B cell (primary cell): ENCODE measurements at regions of chr18 and their contacts with region 1.

Region 1: DNA sequence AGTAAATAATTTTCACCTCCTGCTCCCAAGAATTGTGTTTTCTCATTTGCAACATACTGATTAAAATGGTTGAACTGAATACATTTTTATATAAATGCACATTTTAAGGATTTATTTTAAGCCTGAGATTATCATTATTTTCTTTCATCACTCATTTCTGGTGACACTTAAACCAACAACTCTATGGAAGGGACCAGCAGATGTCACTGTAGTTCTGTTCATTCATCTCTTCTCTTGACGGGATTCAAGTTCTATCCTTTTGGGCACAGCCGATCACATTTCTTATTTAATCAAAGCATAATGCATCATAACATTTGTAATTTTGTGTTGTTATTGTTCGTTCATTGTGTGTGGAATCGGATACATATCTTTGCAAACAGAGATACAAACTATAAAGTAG is 417.9 kb downstream of the HRH4 start:
- DNase-seq: peak; percentile 39
- ATAC-seq: no peak
- H3K4me3 ChIP-seq: no peak overlapping the region
- H3K4me3 Mint-ChIP-seq: no peak overlapping the region
- H3K27ac ChIP-seq: no peak overlapping the region
- H3K27ac Mint-ChIP-seq: no peak overlapping the region
- H3K4me1 ChIP-seq: no peaks in the 10 kb centered on the region
- H3K4me1 Mint-ChIP-seq: peaks cover 5% of the 10 kb centered on the region
- H3K27me3 ChIP-seq: peaks cover 0 to 6% (median 0%) of the 10 kb centered on the region in 4 experiments
- H3K27me3 Mint-ChIP-seq: peaks cover 15% of the 10 kb centered on the region
- CTCF ChIP-seq: peak; percentile 72

Region 2: GRCh38 chr18:24964216-24964615 is 85.9 kb after region 1 on chr18:
- CTCF ChIA-PET with region 1: no interaction called
- POLR2A ChIA-PET with region 1: no interaction called
- intact Hi-C with region 1: loop called (anchors 10 kb)
- DNase-seq: peak; percentile 76
- ATAC-seq: peak; percentile 100
- H3K4me3 ChIP-seq: no peak overlapping the region
- H3K4me3 Mint-ChIP-seq: no peak overlapping the region
- H3K27ac ChIP-seq: peak overlapping the region; percentile 52 to 85
- H3K27ac Mint-ChIP-seq: peak overlapping the region; percentile 87
- H3K4me1 ChIP-seq: peaks cover 14 to 15% of the 10 kb centered on the region in 2 donors
- H3K4me1 Mint-ChIP-seq: peaks cover 14% of the 10 kb centered on the region
- H3K27me3 ChIP-seq: no peaks in the 10 kb centered on the region
- H3K27me3 Mint-ChIP-seq: no peaks in the 10 kb centered on the region
- CTCF ChIP-seq: no peak

Region 3: GRCh38 chr18:25062720-25063119 is 184.4 kb after region 1 on chr18:
- CTCF ChIA-PET with region 1: no interaction called
- POLR2A ChIA-PET with region 1: no interaction called
- intact Hi-C with region 1: loop called (anchors 1 kb)
- DNase-seq: no peak
- ATAC-seq: no peak
- H3K4me3 ChIP-seq: no peak overlapping the region
- H3K4me3 Mint-ChIP-seq: no peak overlapping the region
- H3K27ac ChIP-seq: no peak overlapping the region
- H3K27ac Mint-ChIP-seq: no peak overlapping the region
- H3K4me1 ChIP-seq: no peaks in the 10 kb centered on the region
- H3K4me1 Mint-ChIP-seq: no peaks in the 10 kb centered on the region
- H3K27me3 ChIP-seq: no peaks in the 10 kb centered on the region
- H3K27me3 Mint-ChIP-seq: no peaks in the 10 kb centered on the region
- CTCF ChIP-seq: no peak

Region 4: GRCh38 chr18:25247725-25248124 is 369.4 kb after region 1 on chr18:
- CTCF ChIA-PET with region 1: no interaction called
- POLR2A ChIA-PET with region 1: no interaction called
- intact Hi-C with region 1: no loop called
- DNase-seq: no peak
- ATAC-seq: no peak
- H3K4me3 ChIP-seq: no peak overlapping the region
- H3K4me3 Mint-ChIP-seq: no peak overlapping the region
- H3K27ac ChIP-seq: no peak overlapping the region
- H3K27ac Mint-ChIP-seq: no peak overlapping the region
- H3K4me1 ChIP-seq: no peaks in the 10 kb centered on the region
- H3K4me1 Mint-ChIP-seq: no peaks in the 10 kb centered on the region
- H3K27me3 ChIP-seq: no peaks in the 10 kb centered on the region
- H3K27me3 Mint-ChIP-seq: peaks cover 3% of the 10 kb centered on the region
- CTCF ChIP-seq: no peak

Region 5: DNA sequence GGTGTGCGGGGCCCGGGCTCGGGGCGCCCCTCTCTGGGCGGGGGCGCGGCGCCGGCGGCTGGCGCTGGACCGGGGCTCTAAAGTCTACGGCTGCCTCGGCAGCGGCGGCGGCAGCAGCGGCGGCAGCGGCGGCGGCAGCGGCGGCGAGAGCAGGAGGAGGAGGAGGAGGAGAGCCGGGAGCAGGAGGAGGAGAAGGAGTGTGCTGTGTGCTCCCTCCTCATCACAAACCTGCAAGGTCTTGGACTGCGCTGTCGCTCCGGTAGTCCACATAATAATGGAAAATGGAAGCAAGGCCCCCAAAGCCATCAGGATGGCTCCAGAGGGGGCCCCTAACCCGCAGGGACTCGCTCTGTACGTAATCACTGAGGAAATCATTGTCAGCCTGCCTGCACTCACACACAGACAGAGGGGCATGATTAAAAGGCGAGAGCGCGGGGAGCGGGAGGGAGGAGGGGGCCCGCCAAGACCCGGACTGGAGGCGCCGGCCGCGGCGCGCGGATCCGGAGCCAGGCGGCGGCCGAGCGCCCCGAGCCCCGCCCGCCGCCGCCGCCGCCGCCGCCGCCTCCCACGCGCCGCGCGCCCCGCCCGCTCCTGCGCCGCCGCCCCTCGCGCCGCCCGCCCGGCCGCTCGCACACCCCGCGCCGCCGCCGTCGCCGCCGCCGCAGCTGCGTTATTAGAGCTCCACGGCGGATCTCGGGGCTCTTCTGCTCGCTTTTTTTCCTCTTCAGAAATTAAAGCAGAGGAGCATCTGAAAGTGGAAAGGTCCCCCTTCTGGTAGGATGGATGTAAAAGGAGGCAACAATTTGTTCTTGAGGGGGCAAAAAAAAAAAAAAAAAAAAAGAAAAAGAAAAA is 473.7 kb after region 1 on chr18 and contains the start of gene ZNF521:
- CTCF ChIA-PET with region 1: interaction called, 3 read pairs
- POLR2A ChIA-PET with region 1: no interaction called
- intact Hi-C with region 1: loop called (anchors 5 kb)
- DNase-seq: peak; percentile 77
- ATAC-seq: peak; percentile 85
- H3K4me3 ChIP-seq: peak within 1 kb of the TSS; percentile 53 to 73 (median 70)
- H3K4me3 Mint-ChIP-seq: peak within 1 kb of the TSS; percentile 85
- H3K27ac ChIP-seq: no peak within 1 kb of the TSS
- H3K27ac Mint-ChIP-seq: peak within 1 kb of the TSS; percentile 46
- H3K4me1 ChIP-seq: peaks cover 24 to 28% of the 10 kb centered on the region in 2 donors
- H3K4me1 Mint-ChIP-seq: peaks cover 16% of the 10 kb centered on the region
- H3K27me3 ChIP-seq: peaks cover 0 to 53% (median 41%) of the 10 kb centered on the region in 4 experiments
- H3K27me3 Mint-ChIP-seq: peaks cover 43% of the 10 kb centered on the region
- CTCF ChIP-seq: no peak
- total RNA-seq, gene ZNF521: 9.0 and 12.3 TPM in 2 replicates

Region 6: DNA sequence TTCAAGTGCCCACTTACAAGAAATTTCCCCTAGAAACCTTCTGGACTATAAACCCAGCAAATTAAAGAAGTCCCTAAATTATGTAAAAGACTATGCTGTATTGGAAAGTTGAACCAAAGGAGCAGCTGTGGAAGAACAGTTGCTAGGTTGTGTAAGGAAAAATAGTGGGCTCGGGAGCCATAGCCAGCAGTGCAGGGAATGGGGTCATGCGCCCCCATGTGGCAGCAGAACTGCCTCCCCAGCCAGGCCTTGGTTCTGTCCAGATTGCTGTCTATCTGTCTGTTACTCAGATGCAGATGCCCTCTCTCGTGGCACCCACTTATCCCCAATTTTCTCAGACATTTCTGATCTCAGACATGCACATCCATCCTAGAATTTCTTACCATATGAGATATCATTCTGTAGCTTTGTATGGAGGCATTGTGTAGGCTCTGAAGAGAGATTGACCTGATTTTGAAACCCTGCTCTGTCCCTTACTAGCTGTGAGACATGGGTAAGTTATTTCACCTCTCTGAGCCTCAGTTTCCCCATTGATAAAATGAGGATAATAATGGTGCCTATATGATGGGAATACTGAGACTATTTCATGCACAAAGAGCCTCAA is 953.8 kb after region 1 on chr18:
- CTCF ChIA-PET with region 1: interaction called, 7 read pairs
- POLR2A ChIA-PET with region 1: no interaction called
- intact Hi-C with region 1: loop called (anchors 2 kb)
- DNase-seq: peak; percentile 12
- ATAC-seq: no peak
- H3K4me3 ChIP-seq: no peak overlapping the region
- H3K4me3 Mint-ChIP-seq: no peak overlapping the region
- H3K27ac ChIP-seq: no peak overlapping the region
- H3K27ac Mint-ChIP-seq: no peak overlapping the region
- H3K4me1 ChIP-seq: no peaks in the 10 kb centered on the region
- H3K4me1 Mint-ChIP-seq: no peaks in the 10 kb centered on the region
- H3K27me3 ChIP-seq: no peaks in the 10 kb centered on the region
- H3K27me3 Mint-ChIP-seq: peaks cover 12% of the 10 kb centered on the region
- CTCF ChIP-seq: peak; percentile 45

Region 7: GRCh38 chr18:25896178-25896780 is 1018.0 kb after region 1 on chr18:
- CTCF ChIA-PET with region 1: interaction called, 10 read pairs
- POLR2A ChIA-PET with region 1: no interaction called
- intact Hi-C with region 1: no loop called
- DNase-seq: peak; percentile 28
- ATAC-seq: peak; percentile 47
- H3K4me3 ChIP-seq: no peak overlapping the region
- H3K4me3 Mint-ChIP-seq: no peak overlapping the region
- H3K27ac ChIP-seq: no peak overlapping the region
- H3K27ac Mint-ChIP-seq: no peak overlapping the region
- H3K4me1 ChIP-seq: no peaks in the 10 kb centered on the region
- H3K4me1 Mint-ChIP-seq: no peaks in the 10 kb centered on the region
- H3K27me3 ChIP-seq: no peaks in the 10 kb centered on the region
- H3K27me3 Mint-ChIP-seq: peaks cover 18% of the 10 kb centered on the region
- CTCF ChIP-seq: peak; percentile 85